ENCODE measurements at regions of chr19 and their contacts with region 1.

Region 1: GRCh38 chr19:2273356-2274184 is 8.4 kb downstream of the PEAK3 start:
- DNase-seq: peak; percentile 92

Region 2: GRCh38 chr19:1967087-1967608 is 306.4 kb before region 1 on chr19:
- intact Hi-C with region 1: no loop called
- DNase-seq: no peak

Region 3: GRCh38 chr19:2157452-2157851 is 116.1 kb before region 1 on chr19:
- intact Hi-C with region 1: loop called in 1 of 2 experiments (anchors 2 kb)
- DNase-seq: no peak

Region 4: DNA sequence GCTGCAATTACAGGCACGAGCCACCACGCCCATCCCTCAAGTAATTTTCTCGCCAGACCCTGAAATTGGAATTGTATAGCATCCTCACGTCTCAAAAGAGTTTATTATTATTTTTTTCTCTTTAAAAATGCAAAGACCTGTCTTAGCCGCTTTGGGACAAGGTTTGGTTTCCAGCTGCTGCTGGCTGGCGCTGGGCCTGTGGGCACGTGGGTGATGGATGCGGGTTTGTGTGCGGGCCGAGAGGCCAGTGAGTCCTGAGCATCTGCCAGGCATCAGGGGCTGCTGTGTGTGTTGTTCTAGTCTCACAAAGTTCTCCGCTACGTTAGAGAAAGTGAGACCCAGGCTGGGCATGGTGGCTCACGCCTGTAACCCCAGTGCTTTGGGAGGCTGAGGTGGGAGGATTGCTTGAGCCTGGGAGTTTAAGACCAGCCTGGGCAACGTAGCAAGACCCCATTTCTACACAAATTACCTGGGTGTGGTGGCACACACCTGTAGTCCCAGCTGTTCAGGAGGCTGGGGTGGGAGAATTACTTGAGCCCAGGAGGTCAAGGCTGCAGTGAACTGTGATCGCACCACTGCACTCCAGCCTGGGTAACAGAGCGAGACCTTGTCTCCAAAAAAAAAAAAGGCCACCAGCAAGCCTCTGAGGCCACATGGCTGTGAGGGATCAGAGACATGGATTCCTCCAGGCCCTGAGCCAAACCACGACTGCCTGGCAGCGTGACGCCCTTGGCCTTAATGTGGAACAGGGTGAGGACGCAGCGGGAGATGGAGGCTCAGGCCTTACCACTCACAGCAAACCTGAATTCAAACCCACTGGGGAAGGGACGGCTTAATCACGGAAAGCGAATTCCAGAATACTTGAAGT is 81.8 kb after region 1 on chr19:
- intact Hi-C with region 1: no loop called
- DNase-seq: no peak

Region 5: DNA sequence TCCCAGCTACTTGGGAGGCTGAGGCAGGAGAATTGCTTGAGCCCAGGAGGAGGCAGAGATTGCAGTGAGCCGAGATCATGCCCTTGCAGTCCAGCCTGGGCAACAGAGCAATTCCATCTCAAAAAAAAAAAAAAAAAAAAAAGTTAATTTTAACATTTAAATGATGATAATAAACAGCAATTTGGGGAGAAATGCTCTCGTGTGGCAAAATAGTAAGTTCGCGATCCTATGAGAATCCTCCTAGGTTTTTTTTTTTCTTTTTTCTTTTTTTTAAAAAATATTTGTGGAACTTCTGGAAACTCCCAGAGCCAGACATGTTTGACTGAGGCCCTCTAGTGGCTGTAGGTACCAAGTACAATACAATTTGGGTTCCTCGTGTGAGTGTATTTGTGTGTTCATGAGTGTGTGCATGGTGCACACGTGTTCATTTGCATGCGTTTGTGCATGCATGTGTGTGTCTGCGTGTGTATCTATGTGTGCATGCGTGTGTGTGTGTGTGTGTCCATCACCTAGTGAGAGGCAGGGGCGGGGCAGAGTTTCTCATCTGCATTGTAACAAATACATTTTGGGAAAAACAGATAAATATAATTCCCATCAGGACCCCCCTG is 117.7 kb after region 1 on chr19:
- intact Hi-C with region 1: loop called in 1 of 2 experiments (anchors 5 kb)
- DNase-seq: no peak

Measured in posterior vena cava (tissue), 2 donors.